Posterior cingulate gyrus (tissue), 11 donors: ENCODE measurements at regions of chr15 and their contacts with region 1.

Region 1: DNA sequence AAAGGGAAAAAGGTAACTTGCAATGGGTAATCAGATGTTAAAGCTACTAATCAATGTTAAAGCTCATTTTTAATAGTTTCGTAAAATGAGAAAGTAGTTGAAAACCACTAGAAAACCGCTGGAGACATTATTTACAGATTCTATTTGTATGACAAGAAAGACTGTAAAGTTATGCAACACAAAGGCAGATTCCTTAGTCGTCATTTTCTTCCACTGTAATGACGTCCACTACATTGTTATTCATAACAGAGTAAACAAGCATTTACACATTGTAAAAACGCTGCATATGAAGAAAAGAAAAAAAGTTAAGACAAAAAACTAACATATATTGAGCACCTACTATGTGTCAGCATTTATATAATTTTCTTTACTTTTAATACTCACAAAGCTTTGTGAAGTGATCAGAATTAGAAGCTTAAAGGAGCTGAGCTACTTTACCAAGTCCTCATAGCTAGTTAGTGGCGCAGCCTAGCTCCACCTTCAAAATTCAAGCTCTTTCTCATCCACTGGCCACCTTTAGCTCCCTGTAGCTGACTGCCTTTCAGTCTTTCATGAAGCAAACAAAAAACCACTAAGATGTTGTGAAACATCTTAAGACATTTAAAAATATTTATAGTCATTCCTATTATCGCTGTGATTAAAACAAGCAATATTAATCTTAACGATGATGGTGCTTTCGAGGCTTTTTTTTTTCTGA is 100.1 kb upstream of the CDIN1 start:
- DNase-seq: no peak

Region 2: GRCh38 chr15:36415643-36416042 is 63.7 kb before region 1 on chr15:
- intact Hi-C with region 1: loop called (anchors 10 kb)
- DNase-seq: no peak